Panc1 (cell line): ENCODE measurements at regions of chr9 and their contacts with region 1.

Region 1: GRCh38 chr9:36166101-36166927 is 2.9 kb upstream of the CCIN start:
- DNase-seq: peak; percentile 56
- ATAC-seq: peak; percentile 97
- H3K4me3 ChIP-seq: peak overlapping the region; percentile 44 to 55
- H3K27ac ChIP-seq: no peak overlapping the region
- H3K4me1 ChIP-seq: peaks cover 11% of the 10 kb centered on the region; the same call in 1 of the 2 replicates
- H3K27me3 ChIP-seq: no peaks in the 10 kb centered on the region
- CTCF ChIP-seq: no peak

Region 2: GRCh38 chr9:36017278-36017677 is 149.0 kb before region 1 on chr9:
- CTCF ChIA-PET with region 1: no interaction called
- POLR2A ChIA-PET with region 1: no interaction called
- in situ Hi-C with region 1: no loop called
- intact Hi-C with region 1: no loop called
- DNase-seq: no peak
- ATAC-seq: no peak
- H3K4me3 ChIP-seq: no peak overlapping the region
- H3K27ac ChIP-seq: no peak overlapping the region
- H3K4me1 ChIP-seq: no peaks in the 10 kb centered on the region
- H3K27me3 ChIP-seq: peaks cover 26% of the 10 kb centered on the region
- CTCF ChIP-seq: no peak

Region 3: DNA sequence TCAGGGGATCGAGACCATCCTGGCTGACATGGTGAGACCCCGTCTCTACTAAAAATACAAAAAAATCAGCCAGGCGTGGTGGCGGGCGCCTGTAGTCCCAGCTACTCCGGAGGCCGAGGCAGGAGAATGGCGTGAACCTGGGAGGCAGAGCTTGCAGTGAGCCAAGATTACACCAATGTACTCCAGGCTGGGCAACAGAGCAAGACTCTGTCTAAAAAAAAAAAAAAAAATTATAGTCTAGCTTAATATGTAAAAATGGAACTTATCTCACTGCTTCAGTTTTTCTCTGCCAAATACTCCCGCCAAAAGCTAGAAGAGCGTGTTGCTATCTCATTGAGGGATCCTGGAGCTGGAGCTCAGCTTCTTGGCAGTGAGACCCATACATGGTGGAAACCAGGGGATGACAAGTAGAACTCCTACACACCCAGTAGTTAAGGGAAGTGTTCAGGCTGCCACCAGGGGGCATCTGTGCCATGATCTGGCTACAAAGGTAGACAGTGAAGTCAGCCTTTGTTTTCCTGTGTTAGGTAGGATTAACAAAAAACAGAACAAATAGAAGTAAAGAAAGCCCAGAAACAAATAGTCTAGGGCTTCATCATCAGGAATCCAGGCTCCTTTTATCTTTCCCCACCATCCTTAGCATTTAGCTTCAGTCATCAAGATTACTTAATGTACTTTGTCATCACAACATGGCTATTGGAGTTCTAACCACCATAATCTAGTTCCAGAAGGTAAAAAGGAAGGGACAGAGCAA is 63.4 kb before region 1 on chr9:
- CTCF ChIA-PET with region 1: interaction called, 37 read pairs
- POLR2A ChIA-PET with region 1: no interaction called
- in situ Hi-C with region 1: no loop called
- intact Hi-C with region 1: loop called (anchors 1 kb)
- DNase-seq: peak; percentile 69
- ATAC-seq: peak; percentile 95
- H3K4me3 ChIP-seq: no peak overlapping the region
- H3K27ac ChIP-seq: no peak overlapping the region
- H3K4me1 ChIP-seq: peaks cover 3% of the 10 kb centered on the region; the same call in 1 of the 2 replicates
- H3K27me3 ChIP-seq: no peaks in the 10 kb centered on the region
- CTCF ChIP-seq: peak; percentile 98

Region 4: GRCh38 chr9:36110434-36110833 is 55.9 kb before region 1 on chr9:
- CTCF ChIA-PET with region 1: interaction called, 29 read pairs
- POLR2A ChIA-PET with region 1: no interaction called
- in situ Hi-C with region 1: no loop called
- intact Hi-C with region 1: no loop called
- DNase-seq: no peak
- ATAC-seq: peak; percentile 52; the same call in 1 of the 2 replicates
- H3K4me3 ChIP-seq: no peak overlapping the region
- H3K27ac ChIP-seq: no peak overlapping the region
- H3K4me1 ChIP-seq: no peaks in the 10 kb centered on the region
- H3K27me3 ChIP-seq: no peaks in the 10 kb centered on the region
- CTCF ChIP-seq: peak; percentile 54; the same call in 1 of the 2 replicates

Region 5: GRCh38 chr9:36148311-36149051 is 17.8 kb before region 1 on chr9:
- CTCF ChIA-PET with region 1: interaction called, 12 read pairs
- POLR2A ChIA-PET with region 1: interaction called, 4 read pairs
- in situ Hi-C with region 1: no loop called
- intact Hi-C with region 1: no loop called
- DNase-seq: no peak
- ATAC-seq: peak; percentile 59
- H3K4me3 ChIP-seq: no peak overlapping the region
- H3K27ac ChIP-seq: no peak overlapping the region
- H3K4me1 ChIP-seq: peaks cover 6% of the 10 kb centered on the region
- H3K27me3 ChIP-seq: no peaks in the 10 kb centered on the region
- CTCF ChIP-seq: no peak

Region 6: DNA sequence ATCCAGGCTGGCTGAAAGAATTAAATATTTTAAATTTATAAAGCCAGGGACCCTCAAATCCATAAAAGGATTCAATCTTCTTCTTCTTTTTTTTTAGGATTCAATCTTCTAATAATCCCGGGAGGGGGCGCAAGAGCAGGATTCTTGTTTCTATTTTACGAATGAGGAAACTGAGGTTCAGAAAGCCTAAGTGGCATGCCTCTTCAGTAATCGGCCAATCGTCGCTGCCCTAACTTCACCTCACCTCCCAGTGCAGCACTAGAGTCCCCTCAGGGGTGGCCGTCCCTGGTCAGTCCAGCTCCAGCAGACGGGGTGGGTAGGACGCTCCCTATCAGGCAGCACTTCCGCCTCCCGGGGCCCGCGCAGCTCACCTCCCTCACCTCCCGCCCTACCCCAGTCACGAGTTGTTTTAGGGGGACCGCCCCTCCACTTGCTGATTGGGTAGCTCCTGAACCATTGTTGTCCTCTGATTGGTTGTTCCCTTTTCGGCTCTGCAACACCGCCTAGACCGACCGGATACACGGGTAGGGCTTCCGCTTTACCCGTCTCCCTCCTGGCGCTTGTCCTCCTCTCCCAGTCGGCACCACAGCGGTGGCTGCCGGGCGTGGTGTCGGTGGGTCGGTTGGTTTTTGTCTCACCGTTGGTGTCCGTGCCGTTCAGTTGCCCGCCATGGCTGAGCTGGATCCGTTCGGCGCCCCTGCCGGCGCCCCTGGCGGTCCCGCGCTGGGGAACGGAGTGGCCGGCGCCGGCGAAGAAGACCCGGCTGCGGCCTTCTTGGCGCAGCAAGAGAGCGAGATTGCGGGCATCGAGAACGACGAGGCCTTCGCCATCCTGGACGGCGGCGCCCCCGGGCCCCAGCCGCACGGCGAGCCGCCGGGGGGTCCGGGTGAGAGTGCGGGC is 24.3 kb after region 1 on chr9 and contains the start of gene CLTA:
- CTCF ChIA-PET with region 1: interaction called, 10 read pairs
- POLR2A ChIA-PET with region 1: interaction called, 8 read pairs
- in situ Hi-C with region 1: no loop called
- intact Hi-C with region 1: no loop called
- DNase-seq: peak; percentile 99
- ATAC-seq: peak; percentile 99
- H3K4me3 ChIP-seq: peak within 1 kb of the TSS; percentile 78 to 97
- H3K27ac ChIP-seq: peak within 1 kb of the TSS; percentile 99
- H3K4me1 ChIP-seq: peaks cover 30% of the 10 kb centered on the region
- H3K27me3 ChIP-seq: no peaks in the 10 kb centered on the region
- CTCF ChIP-seq: no peak
- total RNA-seq, gene CLTA: 760 TPM